Caco-2 (cell line): ENCODE measurements at regions of chr18 and their contacts with region 1.

Region 1: GRCh38 chr18:70377317-70377799 is 88.5 kb downstream of the SOCS6 start:
- DNase-seq: peak; percentile 42 to 46
- H3K4me3 ChIP-seq: no peak overlapping the region
- H3K4me3 Mint-ChIP-seq: peak overlapping the region; percentile 50
- H3K27ac Mint-ChIP-seq: peak overlapping the region; percentile 95
- H3K4me1 ChIP-seq: peaks cover 83% of the 10 kb centered on the region
- H3K4me1 Mint-ChIP-seq: peaks cover 31% of the 10 kb centered on the region
- H3K27me3 ChIP-seq: no peaks in the 10 kb centered on the region
- H3K27me3 Mint-ChIP-seq: no peaks in the 10 kb centered on the region
- CTCF ChIP-seq: no peak

Region 2: GRCh38 chr18:70195852-70196434 is 181.4 kb before region 1 on chr18:
- CTCF ChIA-PET with region 1: no interaction called
- POLR2A ChIA-PET with region 1: no interaction called
- intact Hi-C with region 1: loop called (anchors 2 kb)
- DNase-seq: peak in 1 of 2 experiments; percentile 23
- H3K4me3 ChIP-seq: no peak overlapping the region
- H3K4me3 Mint-ChIP-seq: no peak overlapping the region
- H3K27ac Mint-ChIP-seq: no peak overlapping the region
- H3K4me1 ChIP-seq: peaks cover 17% of the 10 kb centered on the region; the same call in 1 of the 2 replicates
- H3K4me1 Mint-ChIP-seq: peaks cover 12% of the 10 kb centered on the region
- H3K27me3 ChIP-seq: no peaks in the 10 kb centered on the region
- H3K27me3 Mint-ChIP-seq: no peaks in the 10 kb centered on the region
- CTCF ChIP-seq: peak; percentile 31 to 40

Region 3: DNA sequence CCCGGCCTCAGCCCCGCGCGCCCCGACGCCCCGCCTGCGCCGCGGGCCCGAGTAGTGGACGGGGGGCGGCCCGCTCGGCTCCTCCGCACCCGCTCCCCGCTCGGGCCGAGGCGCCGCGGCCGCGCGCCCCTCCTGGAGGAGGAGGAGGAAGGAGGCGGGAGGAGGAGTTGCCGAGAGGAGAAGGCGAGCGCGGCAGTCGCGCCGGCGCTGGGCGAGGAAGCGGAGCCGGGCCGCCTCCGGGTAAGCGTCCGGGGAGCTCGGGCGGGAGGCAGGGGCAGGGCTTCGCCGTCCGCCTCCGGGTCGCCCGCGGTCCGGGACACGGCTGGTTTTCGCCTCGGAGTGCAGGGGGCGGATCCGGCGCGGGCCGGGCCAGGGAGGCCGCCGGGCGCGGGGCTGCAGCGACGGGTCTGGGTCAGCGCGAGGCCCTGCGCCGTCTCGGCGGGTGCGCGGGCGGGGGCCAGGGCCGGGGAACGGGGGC is 88.5 kb before region 1 on chr18 and contains the start of gene SOCS6:
- CTCF ChIA-PET with region 1: no interaction called
- POLR2A ChIA-PET with region 1: no interaction called
- intact Hi-C with region 1: loop called (anchors 5 kb)
- DNase-seq: peak; percentile 41 to 61
- H3K4me3 ChIP-seq: peak within 1 kb of the TSS; percentile 57
- H3K4me3 Mint-ChIP-seq: peak within 1 kb of the TSS; percentile 70
- H3K27ac Mint-ChIP-seq: no peak within 1 kb of the TSS
- H3K4me1 ChIP-seq: peaks cover 5% of the 10 kb centered on the region; the same call in 1 of the 2 replicates
- H3K4me1 Mint-ChIP-seq: peaks cover 6% of the 10 kb centered on the region
- H3K27me3 ChIP-seq: no peaks in the 10 kb centered on the region
- H3K27me3 Mint-ChIP-seq: no peaks in the 10 kb centered on the region
- CTCF ChIP-seq: no peak
- total RNA-seq, gene SOCS6: 19.0 and 23.2 TPM in 2 replicates

Region 4: DNA sequence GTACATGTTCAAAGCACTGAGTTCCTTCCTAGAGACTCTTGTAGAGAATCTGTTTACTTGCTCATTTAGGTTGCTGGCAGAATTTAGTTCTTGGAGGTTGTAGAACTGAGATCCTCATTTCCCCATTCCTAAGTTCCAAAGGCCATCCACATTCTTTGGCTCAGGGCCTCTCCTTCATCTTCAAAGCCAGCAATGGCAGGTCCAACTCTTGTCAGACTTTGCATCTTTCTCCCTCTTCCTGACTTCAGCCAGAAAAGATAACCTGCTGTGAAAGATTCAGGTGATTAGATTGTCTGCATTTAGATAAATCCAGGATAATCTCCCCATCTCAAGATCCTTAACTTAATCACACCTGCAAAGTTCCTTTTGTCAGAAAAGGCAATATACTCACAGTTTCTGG is 37.4 kb before region 1 on chr18:
- CTCF ChIA-PET with region 1: no interaction called
- POLR2A ChIA-PET with region 1: no interaction called
- intact Hi-C with region 1: loop called (anchors 2 kb)
- DNase-seq: peak; percentile 47 to 65
- H3K4me3 ChIP-seq: no peak overlapping the region
- H3K4me3 Mint-ChIP-seq: no peak overlapping the region
- H3K27ac Mint-ChIP-seq: peak overlapping the region; percentile 57
- H3K4me1 ChIP-seq: peaks cover 15% of the 10 kb centered on the region
- H3K4me1 Mint-ChIP-seq: no peaks in the 10 kb centered on the region
- H3K27me3 ChIP-seq: no peaks in the 10 kb centered on the region
- H3K27me3 Mint-ChIP-seq: no peaks in the 10 kb centered on the region
- CTCF ChIP-seq: no peak

Region 5: DNA sequence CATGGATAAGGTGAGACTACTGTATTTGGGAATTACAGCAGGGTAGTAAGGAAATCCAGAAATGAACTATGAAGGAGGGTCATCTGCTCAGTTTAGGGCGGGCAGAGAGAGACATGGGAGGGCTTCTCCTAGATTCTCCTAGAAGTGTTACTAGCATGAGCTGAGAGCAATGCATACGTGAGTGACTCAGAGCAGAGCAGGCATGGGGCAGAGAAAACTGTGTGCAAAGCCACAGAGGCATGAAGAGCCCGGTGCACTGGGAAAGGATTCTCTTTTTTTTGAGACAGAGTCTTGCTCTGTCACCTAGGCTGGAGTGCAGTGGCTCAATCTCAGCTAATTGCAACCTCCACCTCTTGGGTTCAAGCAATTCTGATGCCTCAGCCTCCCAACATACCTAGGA is 27.7 kb after region 1 on chr18:
- CTCF ChIA-PET with region 1: no interaction called
- POLR2A ChIA-PET with region 1: no interaction called
- intact Hi-C with region 1: no loop called
- DNase-seq: no peak
- H3K4me3 ChIP-seq: no peak overlapping the region
- H3K4me3 Mint-ChIP-seq: no peak overlapping the region
- H3K27ac Mint-ChIP-seq: no peak overlapping the region
- H3K4me1 ChIP-seq: no peaks in the 10 kb centered on the region
- H3K4me1 Mint-ChIP-seq: peaks cover 6% of the 10 kb centered on the region
- H3K27me3 ChIP-seq: no peaks in the 10 kb centered on the region
- H3K27me3 Mint-ChIP-seq: no peaks in the 10 kb centered on the region
- CTCF ChIP-seq: no peak

Region 6: GRCh38 chr18:70464343-70465114 is 87.2 kb after region 1 on chr18:
- CTCF ChIA-PET with region 1: no interaction called
- POLR2A ChIA-PET with region 1: no interaction called
- intact Hi-C with region 1: no loop called
- DNase-seq: peak; percentile 55
- H3K4me3 ChIP-seq: peak overlapping the region; percentile 4
- H3K4me3 Mint-ChIP-seq: peak overlapping the region; percentile 62
- H3K27ac Mint-ChIP-seq: no peak overlapping the region
- H3K4me1 ChIP-seq: no peaks in the 10 kb centered on the region
- H3K4me1 Mint-ChIP-seq: no peaks in the 10 kb centered on the region
- H3K27me3 ChIP-seq: no peaks in the 10 kb centered on the region
- H3K27me3 Mint-ChIP-seq: no peaks in the 10 kb centered on the region
- CTCF ChIP-seq: peak in 1 of 2 experiments; percentile 43